ENCODE measurements at regions of chr7 and their contacts with region 1.

Region 1: DNA sequence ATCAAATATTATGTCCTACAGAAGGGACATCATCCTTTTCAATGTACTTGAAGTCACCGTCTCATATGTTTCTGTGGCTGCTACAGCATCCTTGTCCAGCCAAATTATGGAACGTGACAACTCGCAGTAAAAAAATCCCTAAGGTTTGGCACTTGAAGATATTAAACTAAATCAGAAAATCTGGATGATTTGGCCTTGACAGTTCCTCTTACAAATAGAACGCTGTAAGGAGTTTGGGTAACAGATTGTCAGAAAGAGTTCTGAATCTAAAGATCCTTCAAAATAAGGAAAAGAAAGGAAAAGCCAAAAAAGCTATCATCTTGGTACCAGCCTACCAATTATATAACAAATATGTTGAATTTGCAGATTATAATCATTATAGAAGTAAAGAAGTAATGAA is 21.0 kb downstream of the XRCC2 start:
- DNase-seq: no peak

Region 2: DNA sequence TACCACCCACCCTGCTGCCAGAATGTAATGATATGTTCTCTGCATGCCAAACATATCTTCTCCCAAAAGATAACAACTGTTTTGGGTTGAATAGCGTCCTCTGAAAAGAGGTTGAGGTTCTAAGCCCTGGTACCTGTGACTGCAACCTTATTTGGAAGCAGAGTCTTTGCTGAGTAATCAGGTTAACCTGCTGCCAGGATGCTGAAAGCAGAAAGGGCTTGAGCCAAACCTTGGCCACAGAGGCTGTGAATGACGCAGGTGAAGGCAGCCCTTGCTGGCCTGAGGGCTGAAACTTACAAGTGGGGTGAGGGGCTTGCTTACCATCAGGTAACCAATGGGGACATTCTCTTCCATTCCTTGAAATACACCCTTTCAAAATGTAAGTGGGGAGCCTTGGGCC is 983.5 kb before region 1 on chr7:
- intact Hi-C with region 1: loop called in 1 of 2 experiments (anchors 10 kb)
- DNase-seq: no peak

Region 3: GRCh38 chr7:152537639-152538038 is 117.3 kb before region 1 on chr7:
- intact Hi-C with region 1: loop called in 1 of 2 experiments (anchors 5 kb)
- DNase-seq: no peak